ENCODE measurements at regions of chr20 and their contacts with region 1.

Region 1: GRCh38 chr20:5119435-5120188 is at the start of gene PCNA:
- DNase-seq: peak; percentile 91 to 96 (median 93)
- H3K4me3 ChIP-seq: peak within 1 kb of the TSS; percentile 99
- H3K4me3 Mint-ChIP-seq: peak within 1 kb of the TSS; percentile 91 to 98 (median 95)
- H3K27ac ChIP-seq: peak within 1 kb of the TSS; percentile 90
- H3K27ac Mint-ChIP-seq: peak within 1 kb of the TSS; percentile 89 to 99 (median 96)
- H3K4me1 ChIP-seq: peaks cover 24% of the 10 kb centered on the region
- H3K4me1 Mint-ChIP-seq: peaks cover 27 to 37% (median 30%) of the 10 kb centered on the region in 3 donors
- H3K27me3 ChIP-seq: no peaks in the 10 kb centered on the region
- H3K27me3 Mint-ChIP-seq: no peaks in the 10 kb centered on the region
- total RNA-seq, gene PCNA: 654 to 662 TPM

Region 2: DNA sequence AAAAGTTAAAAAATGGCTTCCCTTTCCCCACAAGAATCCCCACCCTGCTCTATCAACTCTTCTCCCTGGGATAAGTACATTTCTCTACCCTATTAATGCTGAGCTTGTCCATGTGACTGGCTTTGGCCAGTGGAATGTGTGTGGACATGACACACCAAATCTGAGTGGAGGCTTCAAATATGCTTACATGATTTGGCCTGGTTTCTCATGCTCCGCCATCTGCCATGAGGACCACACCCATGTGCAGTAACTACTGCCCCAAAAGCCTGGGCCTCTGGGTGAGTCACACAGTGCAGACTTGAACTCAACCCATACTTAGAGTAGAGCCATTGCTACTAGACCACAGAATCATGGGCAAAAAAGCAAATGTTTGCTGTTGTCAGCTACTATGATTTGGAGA is 332.5 kb before region 1 on chr20:
- CTCF ChIA-PET with region 1: no interaction called
- POLR2A ChIA-PET with region 1: interaction called, 10 read pairs
- DNase-seq: no peak
- H3K4me3 ChIP-seq: no peak overlapping the region
- H3K4me3 Mint-ChIP-seq: no peak overlapping the region
- H3K27ac ChIP-seq: no peak overlapping the region
- H3K27ac Mint-ChIP-seq: peak overlapping the region in 6 of 8 donors; percentile 12 to 82 (median 57)
- H3K4me1 ChIP-seq: no peaks in the 10 kb centered on the region
- H3K4me1 Mint-ChIP-seq: peaks cover 0 to 5% (median 5%) of the 10 kb centered on the region in 3 donors
- H3K27me3 ChIP-seq: no peaks in the 10 kb centered on the region
- H3K27me3 Mint-ChIP-seq: no peaks in the 10 kb centered on the region

Region 3: GRCh38 chr20:5191829-5192569 is 72.4 kb after region 1 on chr20:
- CTCF ChIA-PET with region 1: interaction called, 15 read pairs
- POLR2A ChIA-PET with region 1: no interaction called
- DNase-seq: peak in 4 of 5 donors; percentile 8 to 57 (median 46)
- H3K4me3 ChIP-seq: no peak overlapping the region
- H3K4me3 Mint-ChIP-seq: no peak overlapping the region
- H3K27ac ChIP-seq: no peak overlapping the region
- H3K27ac Mint-ChIP-seq: peak overlapping the region; percentile 15 to 89 (median 80)
- H3K4me1 ChIP-seq: no peaks in the 10 kb centered on the region
- H3K4me1 Mint-ChIP-seq: peaks cover 5 to 6% (median 6%) of the 10 kb centered on the region in 3 donors
- H3K27me3 ChIP-seq: no peaks in the 10 kb centered on the region
- H3K27me3 Mint-ChIP-seq: no peaks in the 10 kb centered on the region